ENCODE measurements at regions of chr20 and their contacts with region 1.

Region 1: DNA sequence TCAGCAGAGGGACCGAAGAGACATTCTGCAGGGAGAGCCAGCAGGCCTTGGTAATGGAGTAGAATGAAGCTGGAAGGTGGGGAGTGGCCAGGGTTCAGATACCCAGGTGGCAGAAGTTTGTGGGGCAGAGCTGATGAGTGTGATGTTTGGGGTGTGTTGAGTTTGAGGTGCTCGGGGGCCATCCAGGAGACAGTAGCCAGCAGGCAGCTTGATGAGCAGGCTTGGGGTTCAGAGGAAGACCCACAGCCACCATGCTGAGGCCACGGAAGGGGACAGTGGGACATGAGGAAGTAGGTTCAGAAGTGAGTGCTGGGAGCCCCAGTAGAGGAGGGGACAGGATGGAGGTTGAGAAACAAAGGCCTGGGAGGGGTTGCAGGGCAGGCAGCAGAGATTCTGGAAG is 11.1 kb upstream of the FOXS1 start:
- DNase-seq: no peak
- ATAC-seq: no peak
- H3K4me3 ChIP-seq: no peak overlapping the region
- H3K27ac ChIP-seq: no peak overlapping the region
- H3K4me1 ChIP-seq: peaks cover 10% of the 10 kb centered on the region
- H3K27me3 ChIP-seq: peaks cover 0 to 6% of the 10 kb centered on the region in 2 experiments; a peak in 1 of 4 replicates
- CTCF ChIP-seq: no peak
- EP300 ChIP-seq: no peak
- POLR2A ChIP-seq: no peak
- RAD21 ChIP-seq: no peak

Region 2: DNA sequence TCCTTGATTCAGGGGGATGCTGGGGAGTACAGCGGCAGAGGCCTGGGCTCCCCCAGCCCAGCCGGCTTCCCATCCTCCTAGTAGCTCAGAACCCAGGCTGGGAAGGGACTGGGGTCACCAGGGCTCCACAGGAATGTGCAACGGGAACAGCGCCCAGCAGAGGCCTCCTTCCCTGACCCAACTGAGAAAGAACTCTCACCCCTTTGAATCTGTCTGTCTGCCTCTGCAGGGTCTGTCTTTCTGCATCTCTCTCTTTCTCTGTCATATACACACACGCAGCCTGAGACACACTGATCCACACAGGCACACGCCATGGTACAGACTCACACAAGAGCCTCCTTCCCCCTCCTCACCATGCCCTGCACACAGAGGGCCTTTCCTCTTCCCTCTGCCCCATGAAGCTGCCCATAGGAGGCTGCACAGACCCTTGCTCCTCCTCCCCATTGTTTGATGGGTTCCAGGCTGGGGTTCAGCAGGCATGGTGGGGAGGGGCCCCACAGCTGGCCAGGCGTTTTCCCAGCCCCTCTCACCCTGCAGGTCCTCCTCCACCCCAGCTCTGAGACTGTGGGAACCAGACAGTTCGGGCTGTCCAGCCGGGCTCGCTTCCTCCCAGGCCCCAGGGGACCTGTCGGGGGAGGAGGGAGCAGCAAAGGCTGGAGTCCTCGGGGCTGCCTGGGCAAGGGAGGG is 13.9 kb before region 1 on chr20:
- CTCF ChIA-PET with region 1: interaction called, 16 read pairs
- POLR2A ChIA-PET with region 1: no interaction called
- RAD21 ChIA-PET with region 1: interaction called, 3 read pairs
- SMC1A ChIA-PET with region 1: interaction called, 4 read pairs
- in situ Hi-C with region 1: no loop called
- intact Hi-C with region 1: no loop called
- DNase-seq: no peak
- ATAC-seq: peak; percentile 24
- H3K4me3 ChIP-seq: no peak overlapping the region
- H3K27ac ChIP-seq: no peak overlapping the region
- H3K4me1 ChIP-seq: peaks cover 5% of the 10 kb centered on the region; the same call in 1 of the 2 replicates
- H3K27me3 ChIP-seq: no peaks in the 10 kb centered on the region
- CTCF ChIP-seq: no peak
- EP300 ChIP-seq: no peak
- POLR2A ChIP-seq: no peak
- RAD21 ChIP-seq: no peak

Region 3: DNA sequence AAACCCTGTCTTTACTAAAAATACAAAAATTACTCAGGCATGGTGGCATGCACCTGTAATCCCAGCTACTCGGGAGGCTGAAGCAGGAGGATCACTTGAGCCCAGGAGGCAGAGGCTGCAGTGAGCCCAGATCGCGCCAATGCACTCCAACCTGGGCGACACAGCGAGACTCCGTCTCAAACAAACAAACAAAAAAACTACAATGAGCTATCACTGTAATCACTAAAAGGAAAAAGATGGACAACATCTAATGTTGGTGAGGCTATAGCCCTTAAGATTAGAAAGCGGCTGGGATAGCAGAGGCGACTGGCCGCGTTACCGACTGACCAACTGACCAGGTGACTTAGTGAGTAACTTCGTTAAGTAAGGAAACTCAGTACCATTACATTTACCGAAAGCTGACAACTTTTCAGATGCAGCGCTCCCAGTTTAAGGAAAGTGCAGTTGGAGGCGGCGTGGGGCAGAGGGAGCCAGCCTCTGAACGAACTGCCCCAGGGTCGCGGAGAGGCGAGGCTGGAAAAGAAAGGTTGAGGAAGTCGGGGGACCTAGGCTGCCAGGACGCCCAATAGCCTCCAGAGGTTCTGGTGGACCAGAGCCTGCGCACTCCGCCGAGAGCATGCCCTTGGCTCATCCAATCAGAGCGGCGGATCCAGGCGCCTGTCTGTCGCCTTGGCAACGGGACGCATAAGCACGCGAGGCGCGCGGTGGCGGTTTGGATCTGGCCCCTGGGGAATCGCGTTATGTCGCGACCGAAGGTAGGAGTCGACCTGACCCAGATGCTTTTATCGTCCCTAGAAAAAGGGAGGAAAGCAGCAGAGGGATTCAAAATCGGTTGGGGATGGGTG is 22.8 kb after region 1 on chr20:
- CTCF ChIA-PET with region 1: interaction called, 8 read pairs
- POLR2A ChIA-PET with region 1: interaction called, 4 read pairs
- RAD21 ChIA-PET with region 1: interaction called, 4 read pairs
- SMC1A ChIA-PET with region 1: interaction called, 15 read pairs
- in situ Hi-C with region 1: no loop called
- intact Hi-C with region 1: no loop called
- DNase-seq: peak; percentile 45
- ATAC-seq: peak; percentile 98
- H3K4me3 ChIP-seq: peak overlapping the region; percentile 88
- H3K27ac ChIP-seq: no peak overlapping the region
- H3K4me1 ChIP-seq: peaks cover 3% of the 10 kb centered on the region; the same call in 1 of the 2 replicates
- H3K27me3 ChIP-seq: no peaks in the 10 kb centered on the region
- CTCF ChIP-seq: no peak
- EP300 ChIP-seq: no peak
- POLR2A ChIP-seq: no peak
- RAD21 ChIP-seq: no peak

Region 4: GRCh38 chr20:31956556-31957526 is 100.3 kb after region 1 on chr20:
- CTCF ChIA-PET with region 1: interaction called, 307 read pairs
- POLR2A ChIA-PET with region 1: interaction called, 10 read pairs
- RAD21 ChIA-PET with region 1: interaction called, 248 read pairs
- SMC1A ChIA-PET with region 1: interaction called, 181 read pairs
- in situ Hi-C with region 1: loop called (anchors 5 kb)
- intact Hi-C with region 1: loop called (anchors 1 kb)
- DNase-seq: no peak
- ATAC-seq: no peak
- H3K4me3 ChIP-seq: no peak overlapping the region
- H3K27ac ChIP-seq: no peak overlapping the region
- H3K4me1 ChIP-seq: no peaks in the 10 kb centered on the region
- H3K27me3 ChIP-seq: no peaks in the 10 kb centered on the region; a peak in 2 of 4 replicates
- CTCF ChIP-seq: no peak
- EP300 ChIP-seq: no peak
- POLR2A ChIP-seq: no peak
- RAD21 ChIP-seq: no peak

Region 5: GRCh38 chr20:31972471-31973021 is 116.0 kb after region 1 on chr20:
- CTCF ChIA-PET with region 1: interaction called, 12 read pairs
- POLR2A ChIA-PET with region 1: no interaction called
- RAD21 ChIA-PET with region 1: interaction called, 4 read pairs
- SMC1A ChIA-PET with region 1: interaction called, 5 read pairs
- in situ Hi-C with region 1: no loop called
- intact Hi-C with region 1: no loop called
- DNase-seq: no peak
- ATAC-seq: no peak
- H3K4me3 ChIP-seq: no peak overlapping the region
- H3K27ac ChIP-seq: no peak overlapping the region
- H3K4me1 ChIP-seq: no peaks in the 10 kb centered on the region
- H3K27me3 ChIP-seq: peaks cover 0 to 6% of the 10 kb centered on the region in 2 experiments; a peak in 3 of 4 replicates
- CTCF ChIP-seq: no peak
- EP300 ChIP-seq: no peak
- POLR2A ChIP-seq: no peak
- RAD21 ChIP-seq: no peak